ENCODE measurements at regions of chr1 and their contacts with region 1.

Region 1: GRCh38 chr1:66253330-66253921 is 280.5 kb upstream of the SGIP1 start:
- DNase-seq: no peak
- ATAC-seq: peak; percentile 89 to 93
- H3K4me3 ChIP-seq: no peak overlapping the region
- H3K27ac ChIP-seq: no peak overlapping the region
- H3K4me1 ChIP-seq: peaks cover 0 to 19% of the 10 kb centered on the region in 2 donors
- H3K27me3 ChIP-seq: no peaks in the 10 kb centered on the region
- CTCF ChIP-seq: peak; percentile 61 to 88 (median 71)
- POLR2A ChIP-seq: no peak

Region 2: GRCh38 chr1:66339944-66340343 is 86.5 kb after region 1 on chr1:
- in situ Hi-C with region 1: loop called in 1 of 4 experiments (anchors 10 kb)
- intact Hi-C with region 1: no loop called
- DNase-seq: no peak
- ATAC-seq: no peak
- H3K4me3 ChIP-seq: peak overlapping the region; percentile 3 to 16 (median 10)
- H3K27ac ChIP-seq: peak overlapping the region; percentile 70 to 83 (median 78)
- H3K4me1 ChIP-seq: peaks cover 65 to 88% of the 10 kb centered on the region in 2 donors
- H3K27me3 ChIP-seq: no peaks in the 10 kb centered on the region
- CTCF ChIP-seq: no peak
- POLR2A ChIP-seq: no peak

Region 3: DNA sequence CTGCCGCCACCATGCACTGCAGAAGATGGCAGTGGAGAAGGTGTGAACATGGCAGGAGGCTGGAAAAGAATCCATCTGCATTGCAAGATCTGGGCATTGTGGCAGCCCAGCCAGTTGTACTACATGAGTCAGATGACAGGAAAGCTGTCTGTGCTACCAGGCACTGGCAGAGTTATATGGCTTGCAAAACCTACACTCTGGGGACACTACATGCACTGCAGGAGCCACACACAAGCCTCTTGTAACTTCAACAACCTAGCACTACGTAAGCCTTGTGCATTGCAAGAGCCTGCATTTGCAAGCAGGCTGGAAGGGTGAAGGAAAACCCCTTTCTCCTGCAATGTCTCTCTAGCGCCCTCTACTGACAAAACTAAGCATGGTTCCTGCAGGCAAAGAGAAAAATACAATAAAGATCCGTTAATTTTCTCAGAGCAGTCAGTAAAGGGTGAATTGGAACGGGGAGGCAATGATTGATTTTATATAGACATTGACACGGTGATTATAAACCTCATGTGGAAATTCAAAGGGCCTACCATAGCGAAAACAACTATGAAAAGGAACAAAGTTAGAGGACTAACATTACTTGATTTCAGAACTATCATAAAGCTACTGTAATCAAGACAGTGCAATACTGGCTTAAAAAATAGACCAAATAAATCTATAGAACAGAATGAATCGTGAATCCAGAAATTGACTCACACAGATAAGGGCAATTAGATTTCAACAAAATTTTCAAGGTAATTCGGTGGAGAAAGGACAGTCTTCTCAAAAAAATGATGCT is 472.6 kb after region 1 on chr1:
- in situ Hi-C with region 1: loop called in 1 of 4 experiments (anchors 25 kb)
- intact Hi-C with region 1: loop called (anchors 10 kb)
- DNase-seq: peak in 1 of 2 donors; percentile 15
- ATAC-seq: peak in 1 of 2 donors; percentile 65
- H3K4me3 ChIP-seq: no peak overlapping the region
- H3K27ac ChIP-seq: no peak overlapping the region
- H3K4me1 ChIP-seq: no peaks in the 10 kb centered on the region
- H3K27me3 ChIP-seq: no peaks in the 10 kb centered on the region
- CTCF ChIP-seq: peak; percentile 40 to 93 (median 54)
- POLR2A ChIP-seq: no peak

Region 4: DNA sequence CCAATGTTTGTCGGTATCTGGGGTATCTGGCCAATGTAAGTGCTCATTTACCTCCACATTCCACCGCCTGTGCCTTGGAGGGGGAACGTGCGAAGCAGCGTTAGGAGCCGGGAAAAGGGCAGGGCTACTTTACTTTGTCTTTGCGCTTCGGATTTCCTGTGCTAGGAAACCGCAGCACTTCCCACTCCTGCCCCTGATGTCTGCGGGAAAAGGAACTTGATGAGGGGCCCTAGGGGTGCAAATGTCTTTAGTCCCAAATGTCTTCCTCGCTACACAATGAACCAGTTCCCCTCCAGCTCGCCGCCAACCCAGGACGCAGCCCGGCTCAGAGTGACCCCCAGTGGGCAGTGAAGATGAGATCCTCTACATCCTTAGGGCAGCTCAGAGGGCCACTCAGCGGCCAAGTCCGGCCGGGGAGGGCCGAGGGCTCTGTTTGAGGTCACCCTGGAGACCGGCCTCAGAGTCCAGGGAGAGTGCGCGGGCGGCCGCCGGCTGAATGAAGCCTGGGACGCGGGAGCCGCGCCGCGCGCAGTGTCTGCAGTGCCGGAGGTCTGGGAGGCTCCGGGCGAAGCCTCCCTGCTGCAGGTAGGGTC is 498.7 kb after region 1 on chr1 and contains the start of gene DYNLT5:
- in situ Hi-C with region 1: loop called in 1 of 4 experiments (anchors 25 kb)
- intact Hi-C with region 1: loop called (anchors 10 kb)
- DNase-seq: peak in 1 of 2 donors; percentile 23
- ATAC-seq: peak; percentile 41 to 73
- H3K4me3 ChIP-seq: peak within 1 kb of the TSS; percentile 40 to 64 (median 55)
- H3K27ac ChIP-seq: peak within 1 kb of the TSS; percentile 26 to 65 (median 54)
- H3K4me1 ChIP-seq: peaks cover 3 to 6% of the 10 kb centered on the region in 2 donors
- H3K27me3 ChIP-seq: peaks cover 0 to 6% (median 2%) of the 10 kb centered on the region in 3 donors
- CTCF ChIP-seq: peak in 1 of 5 experiments; percentile 11
- POLR2A ChIP-seq: no peak
- total RNA-seq, gene DYNLT5: 1.6 TPM in 1 of 4 donors, not detected in the others